ENCODE measurements at regions of chr14 and their contacts with region 1.

Region 1: DNA sequence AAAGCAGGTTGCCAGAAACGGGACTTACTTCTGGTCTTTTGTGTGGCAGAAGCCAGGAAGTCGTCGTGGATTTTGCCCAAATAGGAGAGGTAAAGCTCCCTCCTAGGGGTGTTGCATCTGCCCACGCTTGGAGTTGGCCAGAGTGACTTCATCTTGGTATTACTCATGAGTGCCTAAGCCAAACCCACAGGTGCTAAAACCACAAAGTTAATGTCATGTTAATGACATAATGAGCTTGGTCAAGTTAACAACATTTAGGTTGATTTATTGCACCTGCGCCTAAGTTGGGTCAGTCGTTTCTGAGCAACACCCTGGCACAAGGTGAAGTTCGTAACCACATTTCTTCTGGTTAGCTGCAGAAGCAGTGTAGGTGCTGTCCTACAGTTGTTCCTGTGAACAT is 225.2 kb downstream of the FUT8 start:
- DNase-seq: no peak

Region 2: DNA sequence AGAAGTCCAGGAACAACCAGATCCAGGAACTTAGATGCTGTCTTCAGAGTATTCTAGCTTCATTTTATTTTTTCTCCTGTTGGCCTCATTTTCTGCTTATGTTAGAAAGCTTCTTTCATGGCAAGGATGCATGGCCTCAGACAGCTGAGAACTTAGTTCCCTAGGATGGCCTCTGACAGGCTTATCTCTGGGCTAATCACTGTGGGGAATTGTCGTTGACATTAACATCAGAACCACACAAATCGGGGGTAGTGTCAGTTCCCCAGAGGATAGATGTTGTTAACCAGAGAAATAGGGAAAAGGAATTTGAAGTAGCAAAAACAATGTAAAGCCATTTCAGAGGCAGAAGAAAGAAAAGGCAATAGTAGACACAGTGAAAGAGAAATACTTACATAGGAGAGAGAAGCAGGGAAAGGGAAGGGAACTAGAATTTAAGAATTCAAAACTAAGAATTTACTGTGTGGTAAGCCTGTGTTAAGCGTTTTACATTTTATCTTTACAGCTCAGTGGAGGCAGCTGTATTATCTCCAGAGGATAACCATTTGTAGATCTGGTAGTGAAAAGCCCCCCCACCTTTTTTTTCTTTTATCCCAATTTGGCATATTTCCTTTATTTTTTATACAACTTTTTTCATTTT is 203.4 kb before region 1 on chr14:
- intact Hi-C with region 1: loop called in 1 of 2 experiments (anchors 10 kb)
- DNase-seq: no peak

Region 3: DNA sequence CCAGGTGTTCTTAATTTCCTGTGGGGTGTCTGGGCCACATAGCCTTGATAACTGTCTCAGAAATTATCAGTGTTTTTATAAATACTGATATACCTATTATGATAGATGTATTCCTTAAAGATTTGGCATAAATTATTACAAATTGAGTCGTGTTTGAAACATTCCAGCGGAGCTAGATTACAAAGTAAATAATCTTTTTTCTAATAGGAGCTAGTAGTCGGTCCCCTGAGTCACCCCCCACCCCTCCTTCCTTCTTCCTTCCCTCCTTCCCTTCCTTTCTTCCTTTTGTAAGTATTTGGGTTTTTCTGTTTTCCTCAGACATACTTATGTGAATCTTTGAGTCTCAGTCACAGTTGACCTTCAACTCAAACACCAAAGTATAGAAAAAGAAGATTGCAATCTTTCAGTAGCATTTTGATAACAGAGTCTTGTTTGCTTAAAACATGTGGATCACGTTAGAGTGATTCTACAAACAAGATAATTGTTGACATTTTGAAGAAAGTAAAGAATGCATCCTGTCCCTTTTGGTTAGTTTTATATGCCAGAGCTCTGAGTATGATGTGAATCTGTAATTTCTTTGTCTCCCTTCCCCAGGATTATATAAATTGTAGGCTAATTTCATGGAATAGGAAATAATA is 38.7 kb after region 1 on chr14:
- intact Hi-C with region 1: no loop called
- DNase-seq: no peak

Region 4: GRCh38 chr14:67541448-67542387 is 1903.9 kb after region 1 on chr14:
- intact Hi-C with region 1: no loop called
- DNase-seq: no peak

Measured in posterior vena cava (tissue), 2 donors.